ENCODE measurements at regions of chr1 and their contacts with region 1.

Region 1: DNA sequence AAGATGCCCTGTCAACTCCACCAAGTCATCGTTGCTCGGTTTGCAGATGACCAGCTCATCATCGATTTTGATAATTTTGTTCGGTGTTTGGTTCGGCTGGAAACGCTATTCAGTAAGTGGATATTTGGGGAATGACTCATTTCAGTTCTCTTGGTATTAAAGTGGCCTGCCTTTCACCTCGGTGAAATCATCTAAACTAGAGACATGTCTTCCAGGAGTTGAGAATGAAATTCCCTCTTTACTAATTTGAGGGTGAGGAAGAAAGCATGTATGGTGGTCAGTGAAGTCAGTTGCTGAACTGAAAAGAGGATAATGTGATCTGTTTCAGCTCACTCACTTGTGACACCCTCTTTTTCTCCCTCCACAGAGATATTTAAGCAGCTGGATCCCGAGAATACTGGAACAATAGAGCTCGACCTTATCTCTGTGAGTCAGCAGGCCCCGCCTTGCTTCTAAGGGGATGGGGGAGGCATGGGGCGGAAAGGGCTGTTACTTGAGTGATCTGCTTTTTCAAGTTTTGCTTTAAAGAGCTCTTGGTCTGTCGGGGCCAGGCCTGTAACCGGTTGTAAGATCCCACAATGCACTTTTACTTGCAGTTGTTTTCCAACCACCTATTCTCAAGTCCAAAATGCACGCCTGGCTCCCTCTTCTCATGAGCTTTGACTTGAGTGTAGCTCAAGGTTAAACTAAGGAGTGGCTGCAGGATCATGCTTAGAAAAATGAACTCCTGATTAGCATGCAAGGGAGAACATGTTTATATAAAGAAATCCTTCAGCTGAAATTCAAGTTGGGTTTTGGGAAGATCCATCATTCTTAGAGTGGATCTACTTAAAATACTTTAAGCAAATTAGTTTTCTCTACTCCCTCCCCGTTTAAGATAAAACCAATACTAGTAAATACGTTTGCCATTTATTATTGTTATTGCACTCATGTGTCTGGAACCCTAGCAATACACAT is 59.8 kb downstream of the CAPN2 start:
- DNase-seq: peak; percentile 87 to 90
- H3K4me3 ChIP-seq: peak overlapping the region; percentile 9; the same call in 1 of the 2 replicates
- H3K27ac ChIP-seq: peak overlapping the region; percentile 90
- H3K4me1 ChIP-seq: peaks cover 82% of the 10 kb centered on the region
- H3K27me3 ChIP-seq: no peaks in the 10 kb centered on the region
- CTCF ChIP-seq: no peak

Region 2: GRCh38 chr1:222754366-222755139 is 1017.5 kb before region 1 on chr1:
- CTCF ChIA-PET with region 1: no interaction called
- POLR2A ChIA-PET with region 1: interaction called, 12 read pairs
- intact Hi-C with region 1: no loop called
- DNase-seq: peak in 1 of 2 experiments; percentile 69
- H3K4me3 ChIP-seq: no peak overlapping the region
- H3K27ac ChIP-seq: no peak overlapping the region
- H3K4me1 ChIP-seq: no peaks in the 10 kb centered on the region
- H3K27me3 ChIP-seq: peaks cover 27% of the 10 kb centered on the region
- CTCF ChIP-seq: no peak

Region 3: DNA sequence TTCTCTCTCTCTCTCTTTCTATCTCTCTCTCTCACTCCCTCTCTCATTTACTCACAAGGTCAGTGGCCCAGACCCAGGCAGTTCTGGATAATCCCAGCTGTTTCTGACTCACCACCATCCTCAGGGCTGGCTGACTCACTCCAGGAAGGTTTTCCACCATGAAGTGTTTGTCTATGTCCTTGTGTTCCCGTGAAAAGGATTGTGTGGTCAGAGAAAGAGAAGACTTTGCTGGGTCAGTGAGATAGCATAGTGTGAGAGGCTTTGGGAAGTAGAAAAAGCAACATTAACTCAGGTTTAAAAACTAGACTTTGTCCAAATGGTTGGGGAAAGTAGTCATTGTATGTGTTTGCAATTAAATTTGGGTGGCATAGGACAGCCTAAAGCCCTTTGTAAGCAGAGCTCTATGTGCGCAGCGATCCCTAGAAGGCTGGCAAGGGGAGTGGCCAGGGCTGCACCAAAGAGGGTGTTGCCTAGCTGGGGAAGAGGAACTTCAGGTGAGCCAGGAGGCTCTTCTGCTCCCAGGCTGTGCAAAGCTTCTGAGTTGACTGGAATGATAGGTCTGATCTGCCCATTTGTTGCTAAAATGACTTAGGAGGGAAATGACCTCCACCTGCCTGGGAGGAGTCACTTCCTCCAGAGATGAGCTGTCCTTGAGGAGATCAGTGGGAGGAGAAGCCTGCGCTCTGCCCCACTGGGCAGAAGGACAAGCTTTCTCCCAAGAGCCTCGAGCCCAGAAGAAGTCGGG is 64.7 kb before region 1 on chr1:
- CTCF ChIA-PET with region 1: interaction called, 3 read pairs
- POLR2A ChIA-PET with region 1: interaction called, 9 read pairs
- intact Hi-C with region 1: loop called (anchors 2 kb)
- DNase-seq: peak; percentile 86 to 96
- H3K4me3 ChIP-seq: peak overlapping the region; percentile 45; the same call in 1 of the 2 replicates
- H3K27ac ChIP-seq: peak overlapping the region; percentile 96
- H3K4me1 ChIP-seq: peaks cover 94% of the 10 kb centered on the region
- H3K27me3 ChIP-seq: no peaks in the 10 kb centered on the region
- CTCF ChIP-seq: no peak

Region 4: DNA sequence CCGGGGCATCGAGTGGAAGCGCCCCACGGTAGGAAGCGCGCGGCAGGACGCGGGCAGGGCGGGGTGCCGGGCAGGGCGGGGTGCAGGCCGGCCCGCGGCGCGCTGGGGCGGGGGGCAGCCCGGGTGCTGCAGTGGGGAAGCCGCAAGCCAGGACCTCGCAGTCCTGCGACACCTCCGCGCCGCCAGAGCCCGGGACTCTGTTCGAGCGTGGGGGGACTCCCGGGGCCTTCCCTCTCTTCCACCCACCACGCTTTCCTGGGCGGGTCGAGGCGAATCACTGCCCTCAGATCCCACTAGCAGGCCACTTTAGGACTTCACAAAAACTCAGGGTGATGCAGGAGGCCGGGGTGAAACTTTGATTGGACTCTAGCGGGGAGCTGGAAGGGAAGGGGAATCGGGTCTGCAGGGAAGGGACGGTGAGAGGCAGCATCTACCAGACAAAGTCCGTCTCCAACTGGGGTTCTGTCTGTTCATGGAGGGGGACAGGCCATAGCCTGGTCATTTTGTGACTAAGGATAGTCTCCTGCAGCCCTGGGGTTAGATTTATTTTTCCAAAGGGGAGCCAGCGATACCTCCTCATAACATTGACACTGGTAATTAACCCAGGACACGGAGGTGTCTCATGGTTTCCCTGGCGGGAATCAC is 59.1 kb before region 1 on chr1:
- CTCF ChIA-PET with region 1: interaction called, 3 read pairs
- POLR2A ChIA-PET with region 1: interaction called, 9 read pairs
- intact Hi-C with region 1: loop called (anchors 1 kb)
- DNase-seq: peak in 1 of 2 experiments; percentile 32
- H3K4me3 ChIP-seq: peak overlapping the region; percentile 79
- H3K27ac ChIP-seq: peak overlapping the region; percentile 92
- H3K4me1 ChIP-seq: peaks cover 78% of the 10 kb centered on the region
- H3K27me3 ChIP-seq: no peaks in the 10 kb centered on the region
- CTCF ChIP-seq: no peak

Region 5: GRCh38 chr1:223794136-223794880 is 22.2 kb after region 1 on chr1:
- CTCF ChIA-PET with region 1: no interaction called
- POLR2A ChIA-PET with region 1: interaction called, 7 read pairs
- intact Hi-C with region 1: loop called (anchors 1 kb)
- DNase-seq: peak in 1 of 2 experiments; percentile 85
- H3K4me3 ChIP-seq: no peak overlapping the region
- H3K27ac ChIP-seq: peak overlapping the region; percentile 52
- H3K4me1 ChIP-seq: peaks cover 20% of the 10 kb centered on the region
- H3K27me3 ChIP-seq: no peaks in the 10 kb centered on the region
- CTCF ChIP-seq: no peak

Region 6: GRCh38 chr1:223819730-223820514 is 47.8 kb after region 1 on chr1:
- CTCF ChIA-PET with region 1: no interaction called
- POLR2A ChIA-PET with region 1: no interaction called
- intact Hi-C with region 1: no loop called
- DNase-seq: peak; percentile 31 to 89
- H3K4me3 ChIP-seq: no peak overlapping the region
- H3K27ac ChIP-seq: peak overlapping the region; percentile 80
- H3K4me1 ChIP-seq: peaks cover 43% of the 10 kb centered on the region
- H3K27me3 ChIP-seq: no peaks in the 10 kb centered on the region
- CTCF ChIP-seq: no peak

Measured in PC-9 (cell line).